Activated CD4-positive, alpha-beta memory T cell treated with anti-CD3 and anti-CD28 coated beads for 36 hours (primary cell): ENCODE measurements at regions of chr1 and their contacts with region 1.

Region 1: GRCh38 chr1:236156512-236157208 is 14.3 kb downstream of the GPR137B start:
- DNase-seq: peak; percentile 72
- H3K4me3 Mint-ChIP-seq: no peak overlapping the region
- H3K27ac Mint-ChIP-seq: no peak overlapping the region
- H3K4me1 Mint-ChIP-seq: peaks cover 36% of the 10 kb centered on the region
- H3K27me3 Mint-ChIP-seq: no peaks in the 10 kb centered on the region

Region 2: GRCh38 chr1:236009857-236010256 is 146.8 kb before region 1 on chr1:
- CTCF ChIA-PET with region 1: no interaction called
- POLR2A ChIA-PET with region 1: no interaction called
- intact Hi-C with region 1: no loop called
- DNase-seq: no peak
- H3K4me3 Mint-ChIP-seq: no peak overlapping the region
- H3K27ac Mint-ChIP-seq: no peak overlapping the region
- H3K4me1 Mint-ChIP-seq: no peaks in the 10 kb centered on the region
- H3K27me3 Mint-ChIP-seq: no peaks in the 10 kb centered on the region

Region 3: DNA sequence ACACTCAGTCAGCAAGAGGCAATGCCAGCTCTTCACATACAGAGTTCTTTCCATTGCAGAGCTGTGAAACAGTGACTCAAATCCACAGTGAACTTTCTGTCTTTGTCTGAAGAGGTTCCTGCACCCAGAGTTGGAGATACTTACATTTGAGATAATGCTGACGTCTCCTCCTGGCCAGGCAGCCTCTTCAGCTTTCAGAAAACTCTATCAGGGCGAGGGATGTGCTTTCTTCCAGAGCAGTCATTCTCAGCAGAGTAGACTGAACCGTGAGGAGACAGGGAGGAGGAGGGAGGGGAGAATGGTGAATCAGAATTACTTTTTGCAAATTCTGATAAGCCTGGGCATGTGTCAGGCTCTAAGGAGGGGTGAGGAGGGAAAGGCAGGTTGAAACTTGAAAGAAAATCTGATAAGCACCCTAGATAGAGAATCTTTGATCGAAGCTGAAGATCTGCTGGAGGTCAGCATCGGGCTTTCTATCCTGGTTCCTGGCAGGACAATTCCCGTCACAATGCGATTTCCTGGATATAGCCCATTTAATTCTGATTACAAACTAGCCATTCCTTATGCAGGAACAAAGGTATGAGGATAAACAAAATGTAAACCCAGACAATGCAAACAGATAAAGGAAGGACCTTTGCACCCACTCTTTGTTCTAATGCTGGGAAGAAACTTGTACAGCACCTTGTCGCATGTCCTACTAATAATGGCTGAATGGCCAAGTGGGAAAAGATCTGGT is 72.8 kb before region 1 on chr1:
- CTCF ChIA-PET with region 1: no interaction called
- POLR2A ChIA-PET with region 1: no interaction called
- intact Hi-C with region 1: no loop called
- DNase-seq: peak; percentile 21
- H3K4me3 Mint-ChIP-seq: no peak overlapping the region
- H3K27ac Mint-ChIP-seq: no peak overlapping the region
- H3K4me1 Mint-ChIP-seq: peaks cover 6% of the 10 kb centered on the region
- H3K27me3 Mint-ChIP-seq: peaks cover 3% of the 10 kb centered on the region

Region 4: DNA sequence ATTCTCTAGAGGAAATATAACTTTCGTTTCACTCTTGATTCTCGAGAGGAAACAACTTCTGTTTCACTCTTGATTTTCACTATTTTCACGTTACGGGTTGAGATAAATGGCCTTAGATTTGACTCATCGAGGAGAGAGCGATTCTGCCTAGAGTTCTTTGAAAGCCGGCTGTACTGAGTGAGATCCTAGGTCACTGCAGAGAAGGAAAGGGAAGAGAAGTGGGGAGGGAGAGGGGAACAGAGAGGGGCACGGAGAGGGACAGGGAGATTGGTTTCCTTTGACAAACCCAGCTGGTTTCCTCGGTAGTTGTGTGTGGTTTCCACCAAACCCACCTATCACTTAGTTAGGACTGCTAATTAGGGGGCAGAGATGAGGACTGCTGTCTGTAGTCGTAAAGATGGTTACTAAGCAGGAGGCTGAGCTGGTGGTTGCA is 35.9 kb before region 1 on chr1:
- CTCF ChIA-PET with region 1: no interaction called
- POLR2A ChIA-PET with region 1: no interaction called
- intact Hi-C with region 1: loop called (anchors 5 kb)
- DNase-seq: no peak
- H3K4me3 Mint-ChIP-seq: no peak overlapping the region
- H3K27ac Mint-ChIP-seq: no peak overlapping the region
- H3K4me1 Mint-ChIP-seq: peaks cover 26% of the 10 kb centered on the region
- H3K27me3 Mint-ChIP-seq: peaks cover 7% of the 10 kb centered on the region

Region 5: DNA sequence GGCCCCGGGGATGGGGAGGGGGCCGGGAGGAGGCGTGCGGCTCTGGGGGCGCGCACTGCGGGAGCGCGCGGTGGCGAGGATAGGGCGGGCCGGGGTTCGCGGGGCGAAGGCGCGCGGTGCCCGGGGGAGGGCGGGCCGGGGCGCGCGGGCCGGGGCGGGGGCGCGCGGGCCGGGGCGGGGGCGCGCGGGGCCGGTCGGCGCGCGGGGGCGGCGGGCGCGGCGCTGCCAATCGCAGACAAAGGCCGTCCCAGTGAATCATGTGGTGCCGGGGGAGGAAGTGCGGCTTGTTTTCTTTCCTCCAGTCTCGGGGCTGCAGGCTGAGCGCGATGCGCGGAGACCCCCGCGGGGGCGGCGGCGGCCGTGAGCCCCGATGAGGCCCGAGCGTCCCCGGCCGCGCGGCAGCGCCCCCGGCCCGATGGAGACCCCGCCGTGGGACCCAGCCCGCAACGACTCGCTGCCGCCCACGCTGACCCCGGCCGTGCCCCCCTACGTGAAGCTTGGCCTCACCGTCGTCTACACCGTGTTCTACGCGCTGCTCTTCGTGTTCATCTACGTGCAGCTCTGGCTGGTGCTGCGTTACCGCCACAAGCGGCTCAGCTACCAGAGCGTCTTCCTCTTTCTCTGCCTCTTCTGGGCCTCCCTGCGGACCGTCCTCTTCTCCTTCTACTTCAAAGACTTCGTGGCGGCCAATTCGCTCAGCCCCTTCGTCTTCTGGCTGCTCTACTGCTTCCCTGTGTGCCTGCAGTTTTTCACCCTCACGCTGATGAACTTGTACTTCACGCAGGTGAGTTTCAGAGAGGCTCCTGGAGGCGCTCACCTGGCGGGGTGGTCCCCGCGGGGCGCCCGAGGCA is 14.2 kb before region 1 on chr1 and contains the start of gene GPR137B:
- CTCF ChIA-PET with region 1: no interaction called
- POLR2A ChIA-PET with region 1: interaction called, 9 read pairs
- intact Hi-C with region 1: loop called (anchors 1 kb)
- DNase-seq: peak; percentile 78
- H3K4me3 Mint-ChIP-seq: peak within 1 kb of the TSS; percentile 94
- H3K27ac Mint-ChIP-seq: peak within 1 kb of the TSS; percentile 78
- H3K4me1 Mint-ChIP-seq: peaks cover 21% of the 10 kb centered on the region
- H3K27me3 Mint-ChIP-seq: peaks cover 27% of the 10 kb centered on the region
- total RNA-seq, gene GPR137B: 5.6 TPM

Region 6: DNA sequence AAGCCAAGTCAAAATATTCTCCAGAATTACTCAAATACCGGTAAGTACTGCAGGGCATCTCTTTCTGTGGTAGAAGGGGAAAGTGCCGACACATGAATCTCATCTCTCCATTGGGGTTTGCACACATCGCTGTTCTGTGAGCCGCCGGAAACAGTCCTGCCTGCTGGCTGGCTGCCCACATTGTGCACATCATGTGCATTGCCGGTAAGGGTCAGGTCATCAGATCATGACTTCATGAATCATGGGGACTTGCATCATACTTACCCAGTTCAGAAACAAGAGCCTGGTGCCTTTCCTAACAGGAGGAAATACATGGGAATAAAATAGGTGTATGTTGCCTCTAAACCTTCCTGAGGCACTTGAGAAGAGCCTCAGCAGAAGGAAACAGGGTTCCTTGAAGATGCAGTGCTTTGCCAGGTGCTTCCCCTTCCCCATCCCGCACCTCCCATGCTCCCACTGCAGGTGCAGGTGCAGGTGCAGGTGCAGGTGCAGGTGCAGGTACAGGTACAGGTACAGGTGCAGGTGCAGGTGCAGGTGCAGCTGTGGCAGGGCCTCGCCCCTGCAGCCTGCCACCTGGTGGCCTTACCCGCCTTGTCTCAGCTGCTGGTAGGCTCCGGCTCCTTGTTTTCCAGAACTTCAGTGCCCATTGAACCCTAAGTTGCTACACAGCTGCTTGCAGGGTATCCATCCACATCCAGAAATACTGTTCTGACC is 12.2 kb after region 1 on chr1:
- CTCF ChIA-PET with region 1: no interaction called
- POLR2A ChIA-PET with region 1: no interaction called
- intact Hi-C with region 1: loop called (anchors 1 kb)
- DNase-seq: peak; percentile 69
- H3K4me3 Mint-ChIP-seq: no peak overlapping the region
- H3K27ac Mint-ChIP-seq: no peak overlapping the region
- H3K4me1 Mint-ChIP-seq: peaks cover 8% of the 10 kb centered on the region
- H3K27me3 Mint-ChIP-seq: no peaks in the 10 kb centered on the region